ENCODE measurements at regions of chr1 and their contacts with region 1.

Region 1: GRCh38 chr1:67766141-67766978 is 66.9 kb downstream of the GNG12 start:
- DNase-seq: peak; percentile 35
- H3K4me3 ChIP-seq: peak overlapping the region; percentile 2; the same call in 1 of the 2 replicates
- H3K27me3 ChIP-seq: no peaks in the 10 kb centered on the region
- CTCF ChIP-seq: peak; percentile 68

Region 2: DNA sequence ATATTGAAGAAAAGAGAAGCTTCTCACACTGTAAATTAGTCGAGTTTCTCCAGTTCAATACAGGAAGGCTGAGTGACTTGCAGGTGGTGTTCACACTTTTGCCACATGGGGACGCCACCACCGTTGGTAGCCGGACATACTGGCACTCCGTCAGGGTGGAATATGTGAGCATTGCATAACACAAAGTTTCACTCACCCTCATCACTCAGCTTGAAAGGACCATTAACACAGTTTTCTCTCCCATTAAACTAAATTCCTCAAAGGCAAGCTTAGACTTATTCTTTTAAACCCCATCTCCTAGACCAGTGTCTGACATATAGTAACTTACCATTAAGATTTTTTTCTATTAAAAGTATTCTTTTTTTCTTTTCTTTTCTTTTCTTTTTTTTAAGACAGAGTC is 230.9 kb before region 1 on chr1:
- CTCF ChIA-PET with region 1: interaction called, 233 read pairs
- POLR2A ChIA-PET with region 1: no interaction called
- DNase-seq: peak; percentile 45
- H3K4me3 ChIP-seq: no peak overlapping the region
- H3K27me3 ChIP-seq: no peaks in the 10 kb centered on the region
- CTCF ChIP-seq: peak; percentile 99

Region 3: GRCh38 chr1:67749844-67750689 is 16.3 kb before region 1 on chr1:
- CTCF ChIA-PET with region 1: interaction called, 20 read pairs
- POLR2A ChIA-PET with region 1: interaction called, 10 read pairs
- DNase-seq: no peak
- H3K4me3 ChIP-seq: peak overlapping the region; percentile 1; the same call in 1 of the 2 replicates
- H3K27me3 ChIP-seq: no peaks in the 10 kb centered on the region
- CTCF ChIP-seq: no peak

Region 4: GRCh38 chr1:67785847-67786753 is 19.7 kb after region 1 on chr1:
- CTCF ChIA-PET with region 1: interaction called, 12 read pairs
- POLR2A ChIA-PET with region 1: no interaction called
- DNase-seq: no peak
- H3K4me3 ChIP-seq: no peak overlapping the region
- H3K27me3 ChIP-seq: no peaks in the 10 kb centered on the region
- CTCF ChIP-seq: no peak

Region 5: DNA sequence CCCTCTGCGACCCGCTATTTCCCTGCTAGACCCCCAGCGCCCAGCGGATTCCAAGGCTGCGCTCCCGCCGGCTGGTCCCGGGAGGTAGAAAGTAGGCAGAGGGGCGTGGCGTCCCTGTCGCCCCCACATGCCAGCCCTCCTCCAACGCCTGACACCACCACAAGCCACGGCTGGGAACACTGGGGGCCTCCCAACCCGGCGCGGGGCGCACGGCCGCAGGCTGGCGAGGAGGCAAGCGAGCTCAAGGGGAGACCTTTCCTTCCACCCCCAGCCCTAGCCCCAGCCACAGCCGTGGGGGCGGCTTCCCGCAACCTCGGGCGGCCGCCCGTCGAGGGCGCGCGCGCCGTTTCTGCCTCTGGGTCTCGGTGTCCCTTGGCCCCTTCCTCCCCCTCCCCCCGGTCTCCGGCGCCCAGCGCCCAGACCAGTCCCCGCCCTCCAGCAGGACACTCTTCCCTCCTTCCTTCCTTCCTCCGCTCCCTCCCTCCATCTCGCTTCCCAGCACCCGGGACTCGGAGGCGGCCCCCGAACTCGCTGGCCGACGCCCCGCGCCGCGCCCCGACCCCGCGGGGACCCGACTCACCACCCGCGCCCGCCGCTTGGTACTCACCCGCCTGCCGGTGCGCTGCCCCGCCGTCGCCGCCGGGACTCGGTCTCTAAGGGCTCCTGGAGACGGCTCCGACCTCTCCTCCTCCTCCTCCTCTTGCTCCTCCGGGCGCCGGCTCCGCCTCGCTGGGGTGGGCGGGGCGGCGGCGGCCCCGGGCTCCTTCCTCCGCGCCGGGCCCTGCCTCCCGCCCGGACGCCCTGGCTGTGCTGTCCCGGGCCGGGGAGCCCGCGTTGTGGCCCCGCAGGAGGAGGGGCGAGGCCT is 66.6 kb after region 1 on chr1 and contains the start of gene GNG12:
- CTCF ChIA-PET with region 1: interaction called, 28 read pairs
- POLR2A ChIA-PET with region 1: no interaction called
- DNase-seq: no peak
- H3K4me3 ChIP-seq: peak within 1 kb of the TSS; percentile 76
- H3K27me3 ChIP-seq: no peaks in the 10 kb centered on the region
- CTCF ChIP-seq: no peak
- polyA plus RNA-seq, gene GNG12: 99.6 and 190 TPM in 2 replicates

Region 6: GRCh38 chr1:67853704-67854103 is 87.3 kb after region 1 on chr1:
- CTCF ChIA-PET with region 1: interaction called, 67 read pairs
- POLR2A ChIA-PET with region 1: no interaction called
- DNase-seq: no peak
- H3K4me3 ChIP-seq: no peak overlapping the region
- H3K27me3 ChIP-seq: no peaks in the 10 kb centered on the region
- CTCF ChIP-seq: peak; percentile 96

Region 7: DNA sequence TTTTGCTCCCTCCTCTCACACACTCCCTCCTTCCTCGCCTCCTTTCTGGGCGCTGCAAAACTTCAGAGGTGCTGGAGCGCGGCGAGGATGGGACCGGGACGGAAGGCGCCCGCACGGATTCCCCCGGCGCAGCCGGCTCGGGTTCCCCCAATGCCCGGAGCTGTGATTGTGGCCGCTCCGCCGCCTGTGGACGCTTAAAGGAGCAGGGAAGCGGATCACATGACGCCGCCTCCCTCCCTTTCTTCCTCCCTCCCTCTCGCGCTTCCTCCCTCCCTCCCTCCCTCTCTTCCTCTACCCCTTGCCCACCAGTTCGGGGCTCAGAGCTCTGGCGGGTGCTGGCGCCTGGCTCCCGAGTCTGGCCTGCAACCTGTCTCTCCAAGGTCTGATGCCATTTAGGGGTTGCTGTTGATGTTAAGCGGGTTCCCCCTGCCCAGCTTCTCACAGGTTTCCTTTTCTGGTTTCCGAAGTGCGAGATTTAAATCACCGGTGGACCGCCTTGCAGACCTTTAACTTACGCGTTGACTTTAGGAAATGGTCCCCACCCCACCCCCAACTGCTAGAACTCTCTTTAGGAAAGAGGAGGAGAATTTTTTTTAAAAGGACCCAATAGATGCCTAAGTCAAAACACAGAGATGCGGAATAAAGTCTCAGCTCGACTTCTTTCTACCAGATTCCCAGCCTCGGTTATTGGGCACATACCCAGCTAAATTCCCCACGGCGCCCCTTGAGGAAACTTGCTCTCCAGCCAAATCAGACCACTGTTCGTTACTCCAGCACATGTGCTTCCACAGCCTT is 466.2 kb after region 1 on chr1 and contains the start of gene WLS:
- CTCF ChIA-PET with region 1: no interaction called
- POLR2A ChIA-PET with region 1: interaction called, 14 read pairs
- DNase-seq: no peak
- H3K4me3 ChIP-seq: peak within 1 kb of the TSS; percentile 78
- H3K27me3 ChIP-seq: no peaks in the 10 kb centered on the region
- CTCF ChIP-seq: peak; percentile 44
- polyA plus RNA-seq, gene WLS: 28.4 and 34.9 TPM in 2 replicates

Measured in BJ (cell line).